Activated naive CD4-positive, alpha-beta T cell treated with anti-CD3 and anti-CD28 coated beads for 36 hours (primary cell): ENCODE measurements at regions of chr1 and their contacts with region 1.

Region 1: DNA sequence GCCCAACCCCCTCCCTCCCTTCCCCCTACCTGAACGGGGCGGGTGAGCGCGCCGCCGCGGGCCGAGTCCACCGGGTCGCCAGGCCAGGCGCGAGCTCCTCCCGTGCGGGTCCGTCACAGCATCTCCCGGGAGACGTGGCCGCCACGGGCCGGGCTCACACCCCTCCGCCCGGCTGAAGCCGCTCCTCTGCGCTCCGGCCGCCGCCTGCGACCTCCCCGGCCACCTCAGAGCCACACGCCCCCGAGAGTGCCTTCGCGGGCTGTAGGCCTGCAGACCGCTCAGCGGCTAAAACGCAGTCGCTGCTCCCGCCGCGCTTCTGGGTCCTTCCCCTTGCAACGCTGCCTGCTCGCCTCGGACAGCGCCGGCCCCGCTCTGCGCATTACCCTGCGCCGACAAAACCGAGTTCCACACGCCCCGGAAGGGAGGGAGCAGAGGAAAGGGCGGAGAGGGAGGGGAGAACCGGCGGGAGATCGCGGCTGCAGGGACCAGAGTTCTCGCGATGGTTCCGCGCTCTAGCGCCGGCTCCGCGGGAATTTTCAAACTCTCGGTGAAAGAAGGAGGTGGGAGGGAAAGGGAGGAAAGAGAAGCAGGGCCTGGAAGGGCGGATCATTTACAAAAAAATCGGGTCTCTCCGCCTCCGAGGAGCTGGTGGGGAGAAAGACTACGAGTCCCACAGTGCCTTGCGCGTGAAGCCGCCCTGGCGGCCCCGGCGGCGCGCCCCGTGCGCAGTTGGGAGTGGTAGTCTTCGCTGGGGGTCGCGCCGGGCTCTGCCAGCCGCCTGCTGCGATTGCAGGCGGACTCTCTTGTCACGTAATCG is at the start of gene AHCTF1:
- DNase-seq: peak; percentile 96
- H3K4me3 Mint-ChIP-seq: peak within 1 kb of the TSS; percentile 99
- H3K27ac Mint-ChIP-seq: peak within 1 kb of the TSS; percentile 95
- H3K4me1 Mint-ChIP-seq: peaks cover 28% of the 10 kb centered on the region
- H3K27me3 Mint-ChIP-seq: no peaks in the 10 kb centered on the region
- total RNA-seq, gene AHCTF1: 32.1 to 38.8 TPM

Region 2: GRCh38 chr1:246506674-246507481 is 424.9 kb before region 1 on chr1 and contains the start of gene SMYD3:
- CTCF ChIA-PET with region 1: no interaction called
- intact Hi-C with region 1: loop called (anchors 2 kb)
- DNase-seq: peak; percentile 73
- H3K4me3 Mint-ChIP-seq: peak within 1 kb of the TSS; percentile 95
- H3K27ac Mint-ChIP-seq: peak within 1 kb of the TSS; percentile 89
- H3K4me1 Mint-ChIP-seq: peaks cover 15% of the 10 kb centered on the region
- H3K27me3 Mint-ChIP-seq: no peaks in the 10 kb centered on the region
- total RNA-seq, gene SMYD3: 21.3 to 21.4 TPM

Region 3: GRCh38 chr1:246959944-246960693 is 28.4 kb after region 1 on chr1:
- CTCF ChIA-PET with region 1: no interaction called
- intact Hi-C with region 1: loop called (anchors 1 kb)
- DNase-seq: no peak
- H3K4me3 Mint-ChIP-seq: no peak overlapping the region
- H3K27ac Mint-ChIP-seq: peak overlapping the region; percentile 4
- H3K4me1 Mint-ChIP-seq: peaks cover 10% of the 10 kb centered on the region
- H3K27me3 Mint-ChIP-seq: no peaks in the 10 kb centered on the region

Region 4: GRCh38 chr1:247103859-247104591 is 172.3 kb after region 1 on chr1 and contains the start of gene ZNF669:
- CTCF ChIA-PET with region 1: no interaction called
- intact Hi-C with region 1: loop called (anchors 1 kb)
- DNase-seq: peak; percentile 97
- H3K4me3 Mint-ChIP-seq: peak within 1 kb of the TSS; percentile 88
- H3K27ac Mint-ChIP-seq: peak within 1 kb of the TSS; percentile 90
- H3K4me1 Mint-ChIP-seq: peaks cover 17% of the 10 kb centered on the region
- H3K27me3 Mint-ChIP-seq: peaks cover 12% of the 10 kb centered on the region
- total RNA-seq, gene ZNF669: 8.2 to 8.4 TPM

Region 5: DNA sequence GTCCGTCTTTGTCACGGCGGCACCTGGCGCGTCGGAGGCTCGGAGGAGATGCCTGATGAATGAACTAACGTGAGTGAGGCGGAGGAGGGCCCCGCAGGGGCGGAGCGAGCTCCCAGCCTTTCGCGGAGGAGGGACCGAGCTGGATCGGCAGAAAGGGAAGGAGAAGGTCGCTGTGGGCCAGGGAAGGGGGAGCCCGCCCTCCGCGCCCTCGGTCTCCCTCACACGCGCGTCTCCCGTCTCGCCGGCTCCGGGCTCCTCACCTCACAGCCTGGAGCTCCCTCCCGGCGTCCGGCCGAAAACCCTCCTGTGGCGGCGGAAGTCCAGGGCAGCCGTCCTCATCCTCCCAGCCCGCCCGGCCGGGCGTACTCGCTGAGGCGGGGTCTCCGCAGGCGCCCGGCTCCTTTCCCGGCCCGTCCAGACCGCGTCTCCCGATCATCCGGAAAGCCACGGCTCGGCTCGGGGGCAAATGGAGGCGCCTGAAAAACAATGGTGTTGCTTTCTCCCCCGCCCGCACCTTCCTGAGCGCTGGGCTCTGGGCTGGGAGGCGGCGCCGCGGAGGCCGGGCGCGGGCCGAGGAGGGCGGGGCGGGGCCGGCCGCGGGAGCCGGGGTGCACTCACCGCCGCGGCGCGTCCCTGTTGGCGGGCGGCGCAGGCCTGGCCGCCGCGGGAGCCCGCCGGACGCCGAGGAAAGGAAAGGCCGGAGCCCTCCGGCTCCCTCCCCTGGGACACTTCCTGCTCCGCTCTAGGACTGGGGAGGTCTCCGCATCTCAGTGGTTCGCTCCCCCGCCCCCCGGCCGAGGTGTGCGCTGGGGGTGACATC is 399.6 kb after region 1 on chr1 and contains the start of gene ZNF496:
- CTCF ChIA-PET with region 1: no interaction called
- intact Hi-C with region 1: loop called (anchors 2 kb)
- DNase-seq: peak; percentile 80
- H3K4me3 Mint-ChIP-seq: peak within 1 kb of the TSS; percentile 86
- H3K27ac Mint-ChIP-seq: peak within 1 kb of the TSS; percentile 75
- H3K4me1 Mint-ChIP-seq: peaks cover 30% of the 10 kb centered on the region
- H3K27me3 Mint-ChIP-seq: no peaks in the 10 kb centered on the region
- total RNA-seq, gene ZNF496: 9.8 to 10.6 TPM

Region 6: GRCh38 chr1:247906504-247907047 is 974.8 kb after region 1 on chr1:
- CTCF ChIA-PET with region 1: no interaction called
- intact Hi-C with region 1: loop called (anchors 5 kb)
- DNase-seq: peak; percentile 60
- H3K4me3 Mint-ChIP-seq: peak overlapping the region; percentile 24
- H3K27ac Mint-ChIP-seq: peak overlapping the region; percentile 76
- H3K4me1 Mint-ChIP-seq: peaks cover 31% of the 10 kb centered on the region
- H3K27me3 Mint-ChIP-seq: peaks cover 3% of the 10 kb centered on the region